Activated CD8-positive, alpha-beta T cell treated with anti-CD3 and anti-CD28 coated beads for 36 hours (primary cell): ENCODE measurements at regions of chr11 and their contacts with region 1.

Region 1: GRCh38 chr11:63945477-63946163 is 6.8 kb downstream of the NAA40 start:
- DNase-seq: peak; percentile 72
- ATAC-seq: peak; percentile 84
- H3K4me3 Mint-ChIP-seq: no peak overlapping the region
- H3K27ac Mint-ChIP-seq: no peak overlapping the region
- H3K4me1 Mint-ChIP-seq: peaks cover 13% of the 10 kb centered on the region
- H3K27me3 Mint-ChIP-seq: no peaks in the 10 kb centered on the region
- CTCF ChIP-seq: peak; percentile 71

Region 2: DNA sequence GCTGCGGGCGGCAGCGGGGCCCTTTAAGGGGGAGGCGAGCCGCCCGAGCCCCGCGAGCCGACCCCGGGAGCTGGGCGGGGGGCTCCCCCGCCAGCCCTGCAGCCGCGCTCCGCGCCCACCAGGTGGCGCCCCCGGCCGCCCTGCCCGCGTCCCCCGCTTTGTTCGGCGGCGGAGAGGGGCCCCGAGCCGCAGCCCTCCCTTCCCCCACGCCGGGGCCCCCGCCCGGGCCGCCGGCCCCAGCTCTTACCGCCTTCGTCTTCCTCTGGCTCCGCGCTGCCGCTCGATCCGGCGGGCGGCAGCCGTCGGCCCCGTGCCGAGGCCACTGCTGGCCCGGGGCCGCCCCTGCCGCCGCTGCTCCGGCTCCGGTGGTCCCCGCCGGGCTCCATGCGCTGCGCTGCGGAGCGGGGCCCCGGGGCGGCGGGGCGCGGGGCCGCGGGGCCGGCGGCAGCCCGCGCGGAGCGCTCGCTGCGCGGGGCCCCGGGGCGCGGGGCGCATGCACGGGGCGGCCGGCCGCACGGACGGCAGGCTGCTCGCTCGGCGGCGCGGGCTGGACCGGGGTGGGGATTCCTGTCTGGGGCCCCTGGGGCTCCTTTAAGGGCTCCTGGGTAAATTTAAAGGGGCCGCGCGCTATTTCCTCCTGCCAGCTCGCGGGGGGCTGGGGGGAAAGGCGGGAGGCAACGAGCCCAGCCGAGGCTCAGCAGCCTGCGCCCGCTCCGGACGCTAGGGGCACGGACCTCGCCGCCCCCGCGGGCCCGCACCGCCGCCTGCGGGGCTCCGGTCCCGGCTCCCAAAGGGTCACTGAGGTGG is 177.2 kb before region 1 on chr11 and contains the start of gene ZFTA:
- CTCF ChIA-PET with region 1: interaction called, 26 read pairs
- POLR2A ChIA-PET with region 1: no interaction called
- intact Hi-C with region 1: no loop called
- DNase-seq: peak; percentile 71
- ATAC-seq: peak; percentile 72
- H3K4me3 Mint-ChIP-seq: peak within 1 kb of the TSS; percentile 82
- H3K27ac Mint-ChIP-seq: peak within 1 kb of the TSS; percentile 44
- H3K4me1 Mint-ChIP-seq: peaks cover 10% of the 10 kb centered on the region
- H3K27me3 Mint-ChIP-seq: peaks cover 8% of the 10 kb centered on the region
- CTCF ChIP-seq: peak; percentile 72
- total RNA-seq, gene ZFTA: 4.1 to 4.3 TPM

Region 3: DNA sequence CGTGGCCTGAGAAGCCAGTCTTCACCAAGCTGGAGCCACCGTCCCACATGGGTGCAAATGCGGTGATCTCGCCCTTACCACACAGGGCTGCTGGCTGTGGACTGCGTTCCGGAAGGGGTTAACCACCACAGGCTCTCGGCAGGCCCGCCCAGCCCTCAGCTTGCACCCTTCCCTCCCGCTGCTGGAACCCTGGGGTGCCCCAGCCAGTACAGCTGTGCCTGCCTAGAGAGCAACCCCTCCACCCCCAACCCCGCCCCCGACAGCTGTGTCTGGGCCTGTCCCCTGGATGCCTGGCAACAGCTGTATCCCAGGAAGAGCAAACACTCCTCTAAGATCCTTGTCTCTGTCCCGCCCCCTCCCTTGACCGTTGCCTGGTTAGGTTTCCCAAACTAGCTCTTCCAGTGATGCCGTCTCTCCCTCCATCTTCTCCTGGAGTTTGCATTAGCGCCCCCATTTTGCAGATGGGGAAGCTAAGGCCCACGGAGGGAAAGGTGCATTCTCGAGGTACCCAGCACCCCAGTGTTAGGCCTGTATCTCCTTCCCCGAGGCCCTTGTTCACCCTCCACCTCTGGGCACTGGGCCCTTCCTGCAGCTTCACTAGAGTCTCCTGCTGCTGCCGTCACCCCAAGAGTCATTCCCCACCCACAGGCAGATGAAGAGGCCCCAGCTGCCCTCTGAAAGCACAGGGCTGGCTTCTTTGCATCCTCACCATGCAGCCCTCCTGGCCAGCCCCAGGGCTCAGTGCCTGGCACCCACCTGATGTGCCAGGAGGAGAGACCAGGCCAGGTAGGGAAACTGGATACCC is 16.2 kb after region 1 on chr11:
- CTCF ChIA-PET with region 1: interaction called, 19 read pairs
- POLR2A ChIA-PET with region 1: interaction called, 3 read pairs
- intact Hi-C with region 1: no loop called
- DNase-seq: peak; percentile 35
- ATAC-seq: peak; percentile 64
- H3K4me3 Mint-ChIP-seq: no peak overlapping the region
- H3K27ac Mint-ChIP-seq: no peak overlapping the region
- H3K4me1 Mint-ChIP-seq: peaks cover 14% of the 10 kb centered on the region
- H3K27me3 Mint-ChIP-seq: no peaks in the 10 kb centered on the region
- CTCF ChIP-seq: no peak

Region 4: DNA sequence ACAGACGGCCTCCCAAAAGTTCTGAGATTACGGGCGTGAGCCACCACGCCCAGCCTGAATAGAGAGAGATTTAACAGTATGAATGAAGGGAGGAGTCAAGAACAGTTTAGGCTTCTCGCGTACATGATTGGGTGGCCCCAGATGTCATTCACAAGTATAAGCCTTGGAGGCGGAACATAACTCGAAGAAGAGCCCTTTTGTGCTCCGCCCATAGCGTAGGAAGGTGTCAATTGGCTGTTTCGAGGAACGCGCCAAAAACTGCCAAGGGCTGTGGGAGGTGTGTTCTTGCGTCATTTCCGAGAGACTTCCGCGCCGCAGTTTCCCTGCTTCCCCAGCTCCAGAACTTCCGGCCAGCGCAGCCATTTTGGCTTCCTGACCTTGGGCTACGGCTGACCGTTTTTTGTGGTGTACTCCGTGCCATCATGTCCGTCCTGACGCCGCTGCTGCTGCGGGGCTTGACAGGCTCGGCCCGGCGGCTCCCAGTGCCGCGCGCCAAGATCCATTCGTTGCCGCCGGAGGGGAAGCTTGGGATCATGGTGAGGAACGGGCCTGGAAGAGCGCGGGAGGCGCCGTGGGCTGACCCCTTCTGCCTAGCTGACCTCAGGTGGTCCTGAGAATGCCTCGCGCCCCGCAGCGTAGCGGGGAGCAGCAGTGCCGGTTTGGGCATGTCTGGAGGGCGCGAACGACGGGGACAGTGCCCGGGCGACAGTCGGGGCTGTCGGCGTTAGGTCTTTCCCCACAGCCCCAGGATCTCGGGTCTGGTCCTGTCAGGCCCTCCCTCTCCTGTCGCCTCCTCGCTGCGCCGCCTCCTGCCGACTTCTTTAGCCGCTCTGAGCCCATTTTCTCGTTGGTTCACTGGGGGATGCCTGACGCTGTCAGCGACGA is 28.9 kb after region 1 on chr11 and contains the start of gene COX8A:
- CTCF ChIA-PET with region 1: interaction called, 11 read pairs
- POLR2A ChIA-PET with region 1: no interaction called
- intact Hi-C with region 1: no loop called
- DNase-seq: peak; percentile 99
- ATAC-seq: peak; percentile 100
- H3K4me3 Mint-ChIP-seq: peak within 1 kb of the TSS; percentile 100
- H3K27ac Mint-ChIP-seq: peak within 1 kb of the TSS; percentile 100
- H3K4me1 Mint-ChIP-seq: peaks cover 27% of the 10 kb centered on the region
- H3K27me3 Mint-ChIP-seq: no peaks in the 10 kb centered on the region
- CTCF ChIP-seq: no peak
- total RNA-seq, gene COX8A: 436 to 497 TPM